A549 (cell line): ENCODE measurements at regions of chr19 and their contacts with region 1.

Region 1: GRCh38 chr19:54266133-54266532 is 9.1 kb upstream of the LILRB5 start:
- DNase-seq: peak; percentile 54 to 79
- ATAC-seq: peak; percentile 94 to 95
- H3K4me3 ChIP-seq: no peak overlapping the region
- H3K27ac ChIP-seq: no peak overlapping the region
- H3K4me1 ChIP-seq: no peaks in the 10 kb centered on the region
- CTCF ChIP-seq: peak; percentile 79
- EP300 ChIP-seq: no peak
- POLR2A ChIP-seq: no peak
- RAD21 ChIP-seq: peak; percentile 31 to 52; a peak in 3 of 5 replicates

Region 2: DNA sequence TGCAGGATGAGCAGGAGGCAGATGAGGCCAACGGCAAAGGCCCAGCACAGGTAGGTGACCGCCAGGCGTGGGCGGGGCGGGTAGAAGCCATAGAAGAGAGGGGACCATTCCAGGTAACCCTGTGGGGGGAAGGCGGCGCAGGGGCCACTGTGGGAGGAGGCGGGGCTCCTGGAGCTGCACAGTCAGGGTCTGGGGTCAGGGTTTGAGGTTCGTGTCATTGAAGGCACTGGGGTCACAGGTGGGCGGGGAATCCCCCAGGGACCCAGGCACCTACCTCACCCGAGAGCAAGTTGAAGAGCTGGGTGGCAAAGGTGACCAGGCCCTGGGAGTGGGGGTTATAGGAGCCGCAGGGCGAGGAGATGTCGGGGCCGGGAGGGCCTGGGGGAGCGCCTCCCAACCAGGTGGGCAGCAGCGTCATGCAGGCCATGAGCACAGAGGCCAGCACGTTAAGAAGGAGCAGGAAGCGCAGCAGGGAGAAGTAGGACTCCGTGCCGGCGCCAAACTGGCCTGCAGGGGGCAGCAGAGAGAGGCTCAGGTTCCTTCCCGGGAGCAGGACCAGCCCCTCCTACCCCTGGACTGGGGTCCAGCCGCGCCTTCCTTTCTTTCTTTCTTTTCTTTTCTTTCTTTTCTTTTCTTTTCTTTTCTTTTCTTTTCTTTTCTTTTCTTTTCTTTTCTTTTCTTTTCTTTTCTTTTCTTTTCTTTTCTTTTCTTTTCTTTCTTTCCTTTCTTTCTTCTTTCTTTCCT is 97.8 kb before region 1 on chr19:
- CTCF ChIA-PET with region 1: interaction called, 18 read pairs
- POLR2A ChIA-PET with region 1: no interaction called
- DNase-seq: peak; percentile 92 to 95
- ATAC-seq: peak; percentile 82 to 87
- H3K4me3 ChIP-seq: no peak overlapping the region
- H3K27ac ChIP-seq: peak overlapping the region in 1 of 2 experiments; percentile 52; a peak in 2 of 6 replicates
- H3K4me1 ChIP-seq: peaks cover 14% of the 10 kb centered on the region; the same call in 2 of the 3 replicates
- CTCF ChIP-seq: peak; percentile 79
- EP300 ChIP-seq: no peak
- POLR2A ChIP-seq: no peak
- RAD21 ChIP-seq: peak; percentile 71 to 73

Region 3: GRCh38 chr19:54203151-54203611 is 63.0 kb before region 1 on chr19:
- CTCF ChIA-PET with region 1: no interaction called
- POLR2A ChIA-PET with region 1: no interaction called
- DNase-seq: peak in 1 of 2 experiments; percentile 49
- ATAC-seq: no peak
- H3K4me3 ChIP-seq: peak overlapping the region; percentile 95
- H3K27ac ChIP-seq: peak overlapping the region; percentile 92 to 97
- H3K4me1 ChIP-seq: peaks cover 67% of the 10 kb centered on the region
- CTCF ChIP-seq: no peak
- EP300 ChIP-seq: no peak
- POLR2A ChIP-seq: no peak
- RAD21 ChIP-seq: no peak

Region 4: GRCh38 chr19:54248016-54248601 is 18.0 kb before region 1 on chr19:
- CTCF ChIA-PET with region 1: interaction called, 13 read pairs
- POLR2A ChIA-PET with region 1: no interaction called
- DNase-seq: no peak
- ATAC-seq: peak in 1 of 2 experiments; percentile 31; a peak in 2 of 6 replicates
- H3K4me3 ChIP-seq: no peak overlapping the region
- H3K27ac ChIP-seq: no peak overlapping the region
- H3K4me1 ChIP-seq: no peaks in the 10 kb centered on the region
- CTCF ChIP-seq: no peak
- EP300 ChIP-seq: no peak
- POLR2A ChIP-seq: no peak
- RAD21 ChIP-seq: no peak

Region 5: GRCh38 chr19:54279406-54279962 is 13.4 kb after region 1 on chr19:
- CTCF ChIA-PET with region 1: interaction called, 28 read pairs
- POLR2A ChIA-PET with region 1: no interaction called
- DNase-seq: no peak
- ATAC-seq: peak in 1 of 2 experiments; percentile 28; a peak in 2 of 6 replicates
- H3K4me3 ChIP-seq: no peak overlapping the region
- H3K27ac ChIP-seq: no peak overlapping the region
- H3K4me1 ChIP-seq: no peaks in the 10 kb centered on the region
- CTCF ChIP-seq: no peak
- EP300 ChIP-seq: no peak
- POLR2A ChIP-seq: no peak
- RAD21 ChIP-seq: no peak

Region 6: DNA sequence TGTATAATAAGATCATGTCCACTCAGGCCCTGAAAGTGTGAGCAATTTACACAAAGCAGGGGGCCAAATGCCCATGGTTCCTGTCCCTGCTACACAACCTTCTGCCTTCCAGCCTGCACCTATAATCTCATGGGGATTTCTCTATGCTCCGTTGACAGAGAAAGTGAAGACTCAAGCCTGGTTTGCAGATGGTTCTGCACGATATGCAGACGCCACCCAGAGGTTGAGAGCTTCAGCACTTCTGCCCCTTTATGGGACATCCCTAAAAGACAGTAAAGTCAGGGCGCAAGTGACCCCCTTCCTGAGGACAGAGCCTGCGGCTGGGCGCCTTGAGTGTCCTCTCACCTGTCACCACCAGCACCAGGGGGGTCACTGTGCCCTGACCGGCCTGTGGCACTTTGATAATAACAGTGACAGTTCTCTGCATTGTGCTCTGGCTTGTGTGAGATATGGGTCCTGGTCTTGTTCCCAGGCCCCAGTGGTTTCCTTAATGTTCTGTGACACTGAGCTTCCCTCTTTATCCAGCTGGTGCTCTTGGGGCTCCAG is 31.7 kb after region 1 on chr19:
- CTCF ChIA-PET with region 1: interaction called, 13 read pairs
- POLR2A ChIA-PET with region 1: no interaction called
- DNase-seq: peak in 1 of 2 experiments; percentile 29
- ATAC-seq: peak; percentile 74 to 83; a peak in 4 of 6 replicates
- H3K4me3 ChIP-seq: no peak overlapping the region
- H3K27ac ChIP-seq: no peak overlapping the region
- H3K4me1 ChIP-seq: no peaks in the 10 kb centered on the region
- CTCF ChIP-seq: no peak; the same call in 2 of the 3 replicates
- EP300 ChIP-seq: no peak
- POLR2A ChIP-seq: no peak
- RAD21 ChIP-seq: peak; percentile 22 to 49; a peak in 3 of 5 replicates

Region 7: GRCh38 chr19:54383330-54383729 is 117.2 kb after region 1 on chr19:
- CTCF ChIA-PET with region 1: no interaction called
- POLR2A ChIA-PET with region 1: no interaction called
- DNase-seq: no peak
- ATAC-seq: no peak
- H3K4me3 ChIP-seq: no peak overlapping the region
- H3K27ac ChIP-seq: no peak overlapping the region
- H3K4me1 ChIP-seq: 0 out of 3 replicates have a peak, but pooled peaks cover 5% of the 10 kb centered on the region
- CTCF ChIP-seq: no peak
- EP300 ChIP-seq: no peak
- POLR2A ChIP-seq: no peak
- RAD21 ChIP-seq: no peak